ENCODE measurements at regions of chr4 and their contacts with region 1.

Region 1: GRCh38 chr4:158722917-158723793 is at the start of gene PPID:
- DNase-seq: peak; percentile 96
- H3K4me3 ChIP-seq: peak within 1 kb of the TSS; percentile 61 to 86 (median 78)
- H3K27ac ChIP-seq: peak within 1 kb of the TSS; percentile 87 to 94 (median 91)
- H3K4me1 ChIP-seq: peaks cover 9 to 27% (median 17%) of the 10 kb centered on the region in 6 donors
- H3K27me3 ChIP-seq: peaks cover 0 to 13% (median 0%) of the 10 kb centered on the region in 7 donors
- CTCF ChIP-seq: peak in 1 of 11 experiments; percentile 22
- POLR2A ChIP-seq: no peak
- total RNA-seq, gene PPID: 16.5 to 31.5 (median 18.4) TPM

Region 2: DNA sequence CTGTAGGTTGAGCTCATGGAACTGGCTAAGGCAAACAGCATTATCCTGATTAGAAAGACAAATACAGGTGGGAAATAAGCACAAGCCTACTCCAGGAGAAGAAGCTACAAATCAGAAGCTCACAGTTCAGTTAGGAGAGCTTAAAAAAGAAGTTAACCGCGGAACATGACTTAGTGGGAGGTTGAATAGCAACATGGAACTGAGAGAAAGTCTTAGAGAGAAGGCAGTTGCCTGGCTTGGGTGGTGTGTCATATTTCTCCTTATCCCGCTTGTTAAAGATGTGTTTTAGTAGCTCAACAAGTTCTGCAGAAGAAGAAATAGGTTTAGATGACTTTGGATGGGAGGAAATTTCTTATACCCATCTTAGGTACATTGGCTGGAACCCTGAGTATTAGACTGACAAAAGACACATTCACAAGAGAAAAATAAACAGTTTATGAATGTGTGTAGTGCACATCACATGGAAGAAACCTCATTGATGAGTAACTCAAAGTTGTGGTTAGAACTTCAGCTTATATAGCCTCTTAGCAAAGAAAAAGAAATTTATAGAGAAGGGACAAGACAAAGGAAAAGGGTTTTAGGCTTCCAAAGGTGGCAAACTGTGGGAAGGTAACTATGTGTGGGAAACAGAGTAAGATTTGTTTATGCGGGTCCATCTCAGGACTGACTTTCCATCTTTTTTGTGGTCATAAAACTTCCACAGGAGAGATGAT is 238.8 kb before region 1 on chr4:
- intact Hi-C with region 1: no loop called
- DNase-seq: no peak
- H3K4me3 ChIP-seq: no peak overlapping the region
- H3K27ac ChIP-seq: no peak overlapping the region
- H3K4me1 ChIP-seq: no peaks in the 10 kb centered on the region
- H3K27me3 ChIP-seq: no peaks in the 10 kb centered on the region
- CTCF ChIP-seq: no peak
- POLR2A ChIP-seq: no peak

Region 3: DNA sequence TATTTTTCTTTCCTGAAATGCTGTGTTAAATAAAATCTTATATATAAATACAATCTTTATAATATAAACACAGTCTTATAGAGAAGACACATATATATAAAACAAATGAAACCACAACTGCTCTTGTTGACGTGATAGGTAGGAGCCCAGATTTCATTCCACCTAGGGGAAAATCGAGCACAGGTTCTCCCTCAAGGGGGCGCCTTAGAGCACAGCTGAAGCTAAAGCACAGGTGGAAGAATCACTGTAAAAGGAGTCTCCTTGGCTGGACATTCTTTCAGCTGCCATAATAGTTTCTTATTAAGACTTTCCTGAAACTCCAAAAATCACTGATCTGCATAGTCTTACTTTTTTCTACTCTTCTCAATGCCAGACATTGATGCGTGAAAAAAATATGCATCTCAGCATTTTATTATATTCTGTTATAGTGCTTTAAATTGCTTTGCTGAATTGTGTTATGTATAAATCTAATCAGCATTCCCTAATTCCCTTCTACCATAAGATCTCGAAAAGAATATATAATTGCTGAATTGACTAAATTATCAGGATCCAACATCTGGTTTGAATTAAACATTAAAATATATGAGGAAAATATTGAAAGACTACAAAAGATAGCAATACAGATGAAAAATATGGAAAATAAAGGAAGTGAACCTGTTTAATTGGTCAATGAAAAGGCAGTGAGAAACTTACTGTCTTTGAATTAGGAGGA is 227.0 kb before region 1 on chr4:
- intact Hi-C with region 1: no loop called
- DNase-seq: no peak
- H3K4me3 ChIP-seq: no peak overlapping the region
- H3K27ac ChIP-seq: no peak overlapping the region
- H3K4me1 ChIP-seq: no peaks in the 10 kb centered on the region
- H3K27me3 ChIP-seq: no peaks in the 10 kb centered on the region
- CTCF ChIP-seq: peak in 5 of 11 experiments; percentile 36 to 61 (median 46)
- POLR2A ChIP-seq: no peak

Region 4: DNA sequence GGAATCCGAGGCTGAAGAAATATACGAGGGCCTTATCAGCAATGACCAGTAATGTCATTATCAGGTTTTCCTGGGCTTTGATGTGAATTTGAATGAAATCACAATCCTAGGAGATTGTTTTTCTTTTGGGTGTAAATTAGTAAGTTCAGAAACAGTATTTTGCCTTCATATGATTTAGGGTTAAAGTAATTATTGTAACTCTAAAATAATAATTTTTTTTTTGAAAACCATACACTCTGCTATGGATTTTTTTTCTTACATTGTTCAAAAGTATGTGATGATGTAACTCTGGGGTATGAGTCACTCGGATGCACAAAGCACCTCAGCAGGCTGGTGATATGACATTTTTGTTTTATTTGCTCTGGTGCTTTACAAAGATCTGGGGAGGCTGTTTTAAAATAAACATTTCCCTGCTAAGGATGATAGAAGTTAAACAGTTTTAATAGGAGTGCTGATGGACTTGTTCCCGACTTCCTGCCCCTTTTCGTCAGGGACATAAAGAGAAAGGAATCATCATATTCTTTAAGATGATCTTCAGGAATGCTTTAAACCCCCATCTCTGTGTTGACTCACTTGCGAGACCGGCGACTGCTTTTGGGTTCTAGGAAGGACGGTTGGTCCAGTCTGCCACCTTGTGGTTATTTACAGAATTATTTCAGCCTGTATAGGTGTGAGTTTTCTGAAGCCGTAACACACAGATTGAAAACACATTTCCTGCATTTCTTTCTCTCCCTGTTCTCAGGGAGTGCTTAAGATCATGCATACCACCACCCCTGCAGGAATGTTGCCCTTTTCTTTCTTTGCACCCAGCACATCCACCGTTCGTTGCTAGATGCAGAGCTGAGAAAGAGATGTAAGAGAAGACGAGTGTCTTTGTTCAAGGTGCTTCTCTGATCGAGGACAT is 452.2 kb after region 1 on chr4:
- intact Hi-C with region 1: loop called (anchors 10 kb)
- DNase-seq: peak; percentile 74
- H3K4me3 ChIP-seq: peak overlapping the region in 1 of 8 donors; percentile 12
- H3K27ac ChIP-seq: peak overlapping the region in 4 of 8 donors; percentile 18 to 60 (median 24)
- H3K4me1 ChIP-seq: peaks cover 6 to 97% (median 58%) of the 10 kb centered on the region in 6 donors
- H3K27me3 ChIP-seq: no peaks in the 10 kb centered on the region
- CTCF ChIP-seq: peak; percentile 64 to 89 (median 78)
- POLR2A ChIP-seq: no peak

Measured in spleen (tissue), 13 donors.